ENCODE measurements at regions of chr1 and their contacts with region 1.

Region 1: GRCh38 chr1:155244368-155245162 is 10.7 kb downstream of the ENTREP3 start:
- DNase-seq: peak; percentile 100
- H3K4me3 Mint-ChIP-seq: peak overlapping the region; percentile 70
- H3K27ac Mint-ChIP-seq: peak overlapping the region; percentile 29
- H3K4me1 Mint-ChIP-seq: peaks cover 24% of the 10 kb centered on the region
- H3K27me3 Mint-ChIP-seq: no peaks in the 10 kb centered on the region
- CTCF ChIP-seq: peak; percentile 38

Region 2: DNA sequence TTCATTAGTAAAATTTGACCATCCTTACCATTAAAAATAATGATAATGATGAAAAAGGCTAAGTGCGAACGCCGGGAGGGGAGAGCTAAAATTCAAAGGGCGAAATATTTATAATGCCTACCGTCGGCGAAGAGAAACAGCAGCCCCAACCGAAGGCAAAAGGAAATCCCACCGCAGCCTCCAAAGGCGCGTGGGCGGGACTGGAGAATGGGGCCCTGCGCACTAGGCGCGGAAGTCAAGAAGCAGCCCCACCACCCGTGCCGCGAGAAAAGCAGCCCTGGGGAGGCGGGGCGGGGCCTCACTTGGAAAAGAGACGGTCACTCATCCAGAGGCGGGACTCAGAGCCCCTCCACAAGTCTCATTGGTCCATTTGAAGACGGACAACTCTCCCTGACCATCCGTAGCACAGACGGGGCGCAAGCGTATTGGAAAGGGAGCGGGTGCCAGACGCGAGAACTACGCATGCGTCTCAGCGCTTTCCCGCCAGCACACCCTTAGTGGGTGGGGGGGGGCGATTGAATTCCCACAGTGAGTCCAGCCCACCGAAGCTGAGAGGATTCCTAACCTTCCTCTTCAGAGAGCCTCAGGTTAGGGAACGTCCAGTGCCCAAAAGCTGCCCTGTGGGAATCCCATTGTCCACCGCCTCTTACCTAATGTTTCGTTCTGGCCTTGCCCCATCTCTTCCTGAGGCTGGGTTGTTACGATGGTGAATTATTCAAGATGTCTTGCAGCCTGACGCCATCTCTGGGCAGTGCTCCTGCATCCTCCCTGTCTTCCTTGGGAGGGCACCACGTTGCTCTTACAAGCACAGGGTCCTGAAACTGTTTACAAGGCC is 17.1 kb before region 1 on chr1:
- CTCF ChIA-PET with region 1: interaction called, 53 read pairs
- POLR2A ChIA-PET with region 1: interaction called, 34 read pairs
- intact Hi-C with region 1: no loop called
- DNase-seq: peak; percentile 100
- H3K4me3 Mint-ChIP-seq: peak overlapping the region; percentile 85
- H3K27ac Mint-ChIP-seq: peak overlapping the region; percentile 89
- H3K4me1 Mint-ChIP-seq: peaks cover 34% of the 10 kb centered on the region
- H3K27me3 Mint-ChIP-seq: no peaks in the 10 kb centered on the region
- CTCF ChIP-seq: no peak

Region 3: GRCh38 chr1:155261852-155262673 is 17.5 kb after region 1 on chr1 and contains the start of gene SCAMP3:
- CTCF ChIA-PET with region 1: interaction called, 238 read pairs
- POLR2A ChIA-PET with region 1: interaction called, 45 read pairs
- intact Hi-C with region 1: no loop called
- DNase-seq: peak; percentile 100
- H3K4me3 Mint-ChIP-seq: peak within 1 kb of the TSS; percentile 98
- H3K27ac Mint-ChIP-seq: peak within 1 kb of the TSS; percentile 96
- H3K4me1 Mint-ChIP-seq: peaks cover 18% of the 10 kb centered on the region
- H3K27me3 Mint-ChIP-seq: no peaks in the 10 kb centered on the region
- CTCF ChIP-seq: no peak
- total RNA-seq, gene SCAMP3: 80.6 and 88.1 TPM in 2 replicates